B cell (primary cell): ENCODE measurements at regions of chr17 and their contacts with region 1.

Region 1: DNA sequence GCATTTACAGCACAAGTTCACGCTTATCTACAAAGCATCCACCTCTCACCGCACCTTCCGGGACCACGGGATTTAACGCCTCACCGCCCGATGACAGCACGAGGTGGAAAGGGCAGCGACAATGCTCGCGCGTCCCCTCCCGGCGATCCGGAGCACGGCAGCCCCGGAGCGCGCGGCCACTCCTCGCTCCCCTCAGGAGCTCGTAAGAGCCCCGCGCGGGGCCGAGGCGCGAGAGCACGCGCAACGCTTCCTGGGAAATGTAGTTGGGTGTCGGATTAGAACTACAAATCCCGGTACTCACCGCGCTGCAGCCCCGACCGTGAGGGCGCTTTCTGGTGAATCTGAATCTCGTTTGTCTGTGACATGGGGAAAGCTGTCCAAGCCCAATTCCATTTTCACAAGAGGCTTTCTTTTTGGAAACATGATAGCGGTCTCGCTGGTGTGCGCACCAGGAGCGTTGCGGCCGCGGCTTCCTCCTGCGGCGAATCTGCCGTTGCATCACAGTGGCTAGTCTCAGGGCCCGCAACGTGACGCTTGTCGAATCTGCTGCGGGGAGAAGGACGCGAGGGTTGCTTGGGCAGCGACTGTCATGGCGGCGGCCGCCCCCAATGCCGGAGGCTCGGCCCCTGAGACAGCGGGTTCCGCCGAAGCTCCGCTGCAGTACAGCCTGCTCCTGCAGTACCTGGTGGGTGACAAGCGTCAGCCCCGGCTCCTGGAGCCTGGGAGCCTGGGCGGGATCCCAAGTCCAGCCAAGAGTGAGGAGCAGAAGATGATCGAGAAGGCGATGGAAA is at the start of gene TIMM22:
- DNase-seq: peak; percentile 99
- ATAC-seq: peak; percentile 91
- H3K4me3 ChIP-seq: peak within 1 kb of the TSS; percentile 44 to 99 (median 97)
- H3K4me3 Mint-ChIP-seq: peak within 1 kb of the TSS; percentile 99
- H3K27ac ChIP-seq: peak within 1 kb of the TSS; percentile 66 to 85
- H3K27ac Mint-ChIP-seq: peak within 1 kb of the TSS; percentile 99
- H3K4me1 ChIP-seq: peaks cover 11 to 23% of the 10 kb centered on the region in 2 donors
- H3K4me1 Mint-ChIP-seq: peaks cover 19% of the 10 kb centered on the region
- H3K27me3 ChIP-seq: no peaks in the 10 kb centered on the region
- H3K27me3 Mint-ChIP-seq: no peaks in the 10 kb centered on the region
- CTCF ChIP-seq: peak; percentile 89
- total RNA-seq, gene TIMM22: 9.5 and 10.0 TPM in 2 replicates

Region 2: DNA sequence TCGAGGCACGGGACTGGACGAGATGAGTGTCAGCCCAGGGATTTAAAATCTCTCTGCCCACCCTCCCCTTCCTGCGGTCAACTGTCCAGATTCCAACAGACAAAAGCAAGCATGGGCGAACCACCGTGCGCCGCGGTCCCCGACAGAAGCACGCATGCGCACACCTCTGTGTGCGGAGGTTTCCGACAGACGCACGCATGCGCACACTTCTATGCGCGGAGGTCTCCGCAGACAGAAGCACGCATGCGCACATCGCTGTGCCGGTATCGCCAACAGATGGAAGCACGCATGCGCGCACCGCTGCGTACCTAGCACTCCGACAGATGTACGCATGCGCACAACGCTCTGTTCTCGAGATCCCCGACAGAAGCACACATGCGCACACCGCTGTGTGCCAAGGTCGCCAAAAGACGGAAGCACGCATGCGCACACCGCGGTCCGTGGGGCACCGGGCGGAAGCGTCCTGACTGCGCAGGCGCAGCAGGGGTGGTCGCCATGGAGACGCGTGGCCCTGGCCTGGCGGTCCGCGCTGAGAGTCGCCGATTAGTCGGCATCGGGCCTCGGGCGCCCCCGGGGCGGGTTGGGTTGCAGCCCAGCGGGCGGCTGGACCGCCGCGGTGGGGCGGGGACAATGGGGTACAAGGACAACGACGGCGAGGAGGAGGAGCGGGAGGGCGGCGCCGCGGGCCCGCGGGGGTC is 586.8 kb before region 1 on chr17:
- CTCF ChIA-PET with region 1: interaction called, 11 read pairs
- POLR2A ChIA-PET with region 1: interaction called, 11 read pairs
- intact Hi-C with region 1: loop called (anchors 1 kb)
- DNase-seq: peak; percentile 100
- ATAC-seq: peak; percentile 82
- H3K4me3 ChIP-seq: peak overlapping the region; percentile 31 to 92 (median 75)
- H3K4me3 Mint-ChIP-seq: peak overlapping the region; percentile 92
- H3K27ac ChIP-seq: peak overlapping the region; percentile 61 to 88
- H3K27ac Mint-ChIP-seq: peak overlapping the region; percentile 97
- H3K4me1 ChIP-seq: peaks cover 20 to 22% of the 10 kb centered on the region in 2 donors
- H3K4me1 Mint-ChIP-seq: peaks cover 39% of the 10 kb centered on the region
- H3K27me3 ChIP-seq: peaks cover 0 to 6% (median 2%) of the 10 kb centered on the region in 4 experiments
- H3K27me3 Mint-ChIP-seq: peaks cover 9% of the 10 kb centered on the region
- CTCF ChIP-seq: no peak

Region 3: GRCh38 chr17:740240-741017 is 256.3 kb before region 1 on chr17:
- CTCF ChIA-PET with region 1: interaction called, 3 read pairs
- POLR2A ChIA-PET with region 1: no interaction called
- intact Hi-C with region 1: loop called (anchors 1 kb)
- DNase-seq: peak; percentile 91
- ATAC-seq: peak; percentile 94
- H3K4me3 ChIP-seq: peak overlapping the region; percentile 15 to 47 (median 33)
- H3K4me3 Mint-ChIP-seq: peak overlapping the region; percentile 65
- H3K27ac ChIP-seq: peak overlapping the region; percentile 70
- H3K27ac Mint-ChIP-seq: peak overlapping the region; percentile 94
- H3K4me1 ChIP-seq: peaks cover 14 to 18% of the 10 kb centered on the region in 2 donors
- H3K4me1 Mint-ChIP-seq: peaks cover 15% of the 10 kb centered on the region
- H3K27me3 ChIP-seq: no peaks in the 10 kb centered on the region
- H3K27me3 Mint-ChIP-seq: no peaks in the 10 kb centered on the region
- CTCF ChIP-seq: no peak

Region 4: DNA sequence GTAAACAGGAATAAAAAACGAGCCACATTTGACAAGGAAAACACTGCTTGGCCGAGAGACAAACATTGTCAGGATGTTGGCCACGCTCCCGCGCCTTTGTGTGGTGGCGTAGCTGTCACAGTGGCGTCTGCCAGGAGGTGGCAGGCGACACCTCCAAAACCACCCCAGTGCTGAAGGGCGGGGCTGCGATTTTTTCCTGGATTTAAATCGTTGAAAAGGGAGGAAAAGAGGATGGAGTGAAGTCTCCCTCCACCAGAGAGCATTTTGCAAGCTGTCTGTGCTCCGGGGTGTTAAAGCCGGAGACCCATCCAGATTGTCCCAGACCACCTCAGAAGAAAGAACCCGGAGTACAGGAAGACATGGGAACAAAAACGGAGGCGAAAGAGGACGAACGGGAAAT is 201.9 kb before region 1 on chr17:
- CTCF ChIA-PET with region 1: interaction called, 15 read pairs
- POLR2A ChIA-PET with region 1: no interaction called
- intact Hi-C with region 1: loop called (anchors 1 kb)
- DNase-seq: peak; percentile 62
- ATAC-seq: no peak
- H3K4me3 ChIP-seq: no peak overlapping the region
- H3K4me3 Mint-ChIP-seq: no peak overlapping the region
- H3K27ac ChIP-seq: no peak overlapping the region
- H3K27ac Mint-ChIP-seq: peak overlapping the region; percentile 37
- H3K4me1 ChIP-seq: peaks cover 0 to 8% of the 10 kb centered on the region in 2 donors
- H3K4me1 Mint-ChIP-seq: peaks cover 5% of the 10 kb centered on the region
- H3K27me3 ChIP-seq: no peaks in the 10 kb centered on the region
- H3K27me3 Mint-ChIP-seq: no peaks in the 10 kb centered on the region
- CTCF ChIP-seq: peak; percentile 71

Region 5: DNA sequence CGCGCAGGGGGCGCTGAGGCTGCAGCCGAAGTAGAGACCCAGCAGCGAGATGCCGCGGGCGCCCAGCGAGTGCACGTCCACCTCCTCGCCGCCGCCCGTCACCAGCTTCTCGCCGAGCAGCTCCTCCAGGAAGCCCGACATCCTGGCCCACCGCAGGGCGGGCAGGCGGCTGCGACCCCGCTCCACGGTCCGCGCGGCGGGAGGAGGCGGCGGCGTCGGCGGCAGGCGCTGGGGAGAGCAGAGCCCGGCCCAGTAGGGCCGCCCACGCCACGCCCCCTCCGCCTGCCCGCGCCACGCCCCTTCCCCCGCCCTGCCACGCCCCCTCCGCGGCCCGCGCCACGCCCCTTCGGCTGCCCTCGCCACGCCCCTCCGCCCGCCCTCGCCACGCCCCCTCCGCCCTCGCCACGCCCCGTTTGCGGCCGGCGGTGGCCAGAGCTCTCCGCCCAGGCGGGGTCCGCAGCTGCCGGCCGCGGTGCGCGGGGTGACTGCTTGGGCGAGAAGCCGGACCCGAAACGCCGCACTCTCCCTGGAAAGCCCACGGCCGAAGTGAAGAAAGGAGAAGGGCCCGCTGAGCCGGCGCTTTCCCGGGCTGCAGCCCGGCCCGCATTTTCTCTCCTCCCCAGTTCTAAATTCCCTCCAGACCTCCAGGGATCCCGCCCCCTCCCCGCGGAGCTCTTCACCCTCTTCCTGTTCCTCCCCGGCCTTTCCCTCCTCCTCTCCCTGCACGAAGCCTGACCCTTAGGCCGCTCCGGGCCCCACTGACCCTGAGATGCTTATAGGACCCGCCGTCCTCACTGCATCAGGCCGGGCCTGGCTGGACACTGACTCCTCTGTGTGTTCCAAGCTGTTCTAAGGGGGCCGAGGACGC is 17.0 kb before region 1 on chr17 and contains the start of gene NXN:
- CTCF ChIA-PET with region 1: interaction called, 36 read pairs
- POLR2A ChIA-PET with region 1: interaction called, 23 read pairs
- intact Hi-C with region 1: loop called (anchors 1 kb)
- DNase-seq: peak; percentile 90
- ATAC-seq: peak; percentile 88
- H3K4me3 ChIP-seq: peak within 1 kb of the TSS; percentile 8 to 67 (median 62)
- H3K4me3 Mint-ChIP-seq: peak within 1 kb of the TSS; percentile 87
- H3K27ac ChIP-seq: peak within 1 kb of the TSS in 1 of 2 donors; percentile 54
- H3K27ac Mint-ChIP-seq: peak within 1 kb of the TSS; percentile 80
- H3K4me1 ChIP-seq: peaks cover 23 to 28% of the 10 kb centered on the region in 2 donors
- H3K4me1 Mint-ChIP-seq: peaks cover 21% of the 10 kb centered on the region
- H3K27me3 ChIP-seq: peaks cover 0 to 33% (median 22%) of the 10 kb centered on the region in 4 experiments
- H3K27me3 Mint-ChIP-seq: peaks cover 23% of the 10 kb centered on the region
- CTCF ChIP-seq: no peak
- total RNA-seq, gene NXN: 0.17 TPM in 1 of 2 replicates, not detected in the other

Region 6: DNA sequence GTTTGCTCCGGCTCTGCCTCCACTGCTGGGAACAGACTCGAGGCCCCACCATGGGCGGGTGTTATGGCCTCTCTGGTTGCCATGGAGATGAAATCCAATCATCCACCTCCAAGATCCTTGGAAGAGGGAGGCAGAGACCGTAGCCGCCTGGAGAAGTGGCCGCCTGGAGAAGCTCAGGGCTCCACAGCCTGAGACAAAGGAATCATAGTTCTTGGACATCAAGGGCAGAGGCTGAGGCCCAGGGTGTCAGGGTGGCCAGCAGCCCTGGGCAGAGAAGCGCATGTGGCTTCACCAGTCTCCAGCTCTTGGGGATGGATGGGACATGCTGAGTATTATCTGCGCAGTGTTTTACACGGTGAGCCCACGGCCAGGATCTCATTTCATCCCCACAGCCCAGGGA is 146.8 kb after region 1 on chr17:
- CTCF ChIA-PET with region 1: no interaction called
- POLR2A ChIA-PET with region 1: no interaction called
- intact Hi-C with region 1: no loop called
- DNase-seq: no peak
- ATAC-seq: no peak
- H3K4me3 ChIP-seq: no peak overlapping the region
- H3K4me3 Mint-ChIP-seq: no peak overlapping the region
- H3K27ac ChIP-seq: no peak overlapping the region
- H3K27ac Mint-ChIP-seq: no peak overlapping the region
- H3K4me1 ChIP-seq: no peaks in the 10 kb centered on the region
- H3K4me1 Mint-ChIP-seq: peaks cover 7% of the 10 kb centered on the region
- H3K27me3 ChIP-seq: no peaks in the 10 kb centered on the region
- H3K27me3 Mint-ChIP-seq: no peaks in the 10 kb centered on the region
- CTCF ChIP-seq: no peak